ENCODE measurements at regions of chr17 and their contacts with region 1.

Region 1: GRCh38 chr17:29219378-29220047 is 27.1 kb upstream of the CRYBA1 start:
- DNase-seq: peak; percentile 81
- ATAC-seq: peak; percentile 95
- H3K4me3 Mint-ChIP-seq: no peak overlapping the region
- H3K27ac Mint-ChIP-seq: no peak overlapping the region
- H3K4me1 Mint-ChIP-seq: peaks cover 9% of the 10 kb centered on the region
- H3K27me3 Mint-ChIP-seq: peaks cover 2% of the 10 kb centered on the region

Region 2: DNA sequence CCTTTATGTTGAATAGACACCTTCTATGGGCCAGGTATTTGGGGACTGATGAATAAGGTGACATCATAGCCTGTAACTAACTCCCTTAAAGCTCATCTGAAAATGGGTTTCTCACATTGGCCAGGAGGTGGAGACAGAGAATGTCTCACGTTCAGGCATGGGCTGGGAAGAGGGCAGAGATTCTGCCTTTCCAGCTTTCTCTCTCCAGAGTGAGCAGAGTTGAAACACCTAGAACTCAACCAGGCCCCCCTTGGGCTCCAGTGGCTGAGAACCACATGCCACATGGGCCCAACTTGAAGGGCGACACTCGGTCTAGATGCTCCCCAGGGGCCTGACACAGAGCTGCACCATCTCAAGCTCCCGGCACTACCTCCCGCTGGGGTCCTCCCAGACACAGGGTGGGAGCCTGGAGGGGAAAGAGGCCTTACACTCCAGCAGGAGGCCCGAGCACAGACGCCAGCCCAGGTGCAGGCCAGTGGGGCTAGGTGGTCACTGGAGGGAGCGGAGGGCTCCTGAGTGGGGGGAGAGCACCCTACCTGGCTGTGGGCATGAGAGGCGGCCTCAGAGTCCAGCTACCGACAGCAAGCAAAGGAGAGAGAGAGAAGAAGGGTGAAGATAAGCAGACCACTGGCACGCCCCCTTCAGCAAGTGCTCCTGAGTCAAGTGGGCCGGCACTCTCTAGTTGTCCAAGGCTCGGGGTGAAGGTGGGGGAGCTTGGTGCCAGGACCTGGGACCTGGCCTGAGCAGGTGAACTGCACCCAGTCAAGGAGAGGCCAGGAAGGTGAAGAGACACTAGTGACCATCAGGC is 95.2 kb before region 1 on chr17:
- CTCF ChIA-PET with region 1: interaction called, 57 read pairs
- POLR2A ChIA-PET with region 1: no interaction called
- DNase-seq: peak; percentile 69
- ATAC-seq: peak; percentile 88
- H3K4me3 Mint-ChIP-seq: no peak overlapping the region
- H3K27ac Mint-ChIP-seq: peak overlapping the region; percentile 30
- H3K4me1 Mint-ChIP-seq: peaks cover 4% of the 10 kb centered on the region
- H3K27me3 Mint-ChIP-seq: no peaks in the 10 kb centered on the region

Region 3: GRCh38 chr17:29140051-29140621 is 79.4 kb before region 1 on chr17:
- CTCF ChIA-PET with region 1: interaction called, 266 read pairs
- POLR2A ChIA-PET with region 1: interaction called, 4 read pairs
- DNase-seq: peak; percentile 95
- ATAC-seq: peak; percentile 76
- H3K4me3 Mint-ChIP-seq: peak overlapping the region; percentile 92
- H3K27ac Mint-ChIP-seq: peak overlapping the region; percentile 98
- H3K4me1 Mint-ChIP-seq: peaks cover 70% of the 10 kb centered on the region
- H3K27me3 Mint-ChIP-seq: no peaks in the 10 kb centered on the region

Region 4: DNA sequence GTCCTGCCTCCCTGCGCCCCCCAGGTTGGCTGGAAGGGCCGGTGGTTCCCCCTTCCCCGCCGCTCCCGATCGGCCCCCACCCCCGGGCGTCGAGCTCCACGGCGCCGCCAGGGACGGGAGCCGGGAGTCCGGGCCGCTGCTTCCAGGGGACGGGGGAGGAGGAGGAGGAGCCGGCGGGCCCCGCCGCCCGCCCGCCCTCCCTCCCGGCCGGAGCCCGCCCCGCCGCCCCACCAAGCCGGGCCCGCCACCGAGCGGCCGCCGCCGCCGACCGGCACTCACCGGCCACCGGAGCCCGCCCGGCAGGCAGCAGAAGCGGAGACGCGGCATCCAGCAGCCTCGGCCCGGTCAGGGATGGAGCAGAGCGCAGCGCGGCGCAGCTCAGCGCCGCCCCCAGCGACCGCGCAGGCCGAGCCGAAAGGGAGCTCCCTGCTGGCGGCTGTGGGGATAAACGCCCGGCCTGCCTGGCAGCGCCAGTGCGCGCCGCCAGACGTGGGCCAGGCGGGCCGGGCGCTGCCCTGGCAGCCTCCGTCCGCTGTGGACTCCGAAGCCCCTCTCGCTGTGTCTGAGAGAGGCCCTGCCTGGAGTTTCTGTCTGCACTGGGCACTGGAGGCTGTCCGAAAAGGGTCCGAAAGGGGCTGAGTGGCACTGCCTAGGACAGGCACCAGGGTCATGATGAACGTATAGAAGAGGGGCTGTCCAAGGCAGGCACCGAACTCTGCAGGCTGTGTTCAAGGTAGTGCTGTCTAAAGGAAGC is 39.3 kb before region 1 on chr17 and contains the start of gene MYO18A:
- CTCF ChIA-PET with region 1: interaction called, 23 read pairs
- POLR2A ChIA-PET with region 1: no interaction called
- DNase-seq: peak; percentile 83
- ATAC-seq: peak; percentile 94
- H3K4me3 Mint-ChIP-seq: peak within 1 kb of the TSS; percentile 51
- H3K27ac Mint-ChIP-seq: no peak within 1 kb of the TSS
- H3K4me1 Mint-ChIP-seq: peaks cover 38% of the 10 kb centered on the region
- H3K27me3 Mint-ChIP-seq: peaks cover 10% of the 10 kb centered on the region
- total RNA-seq, gene MYO18A: 53.4 to 53.8 TPM

Region 5: GRCh38 chr17:29241015-29241963 is 21.8 kb after region 1 on chr17:
- CTCF ChIA-PET with region 1: interaction called, 14 read pairs
- POLR2A ChIA-PET with region 1: no interaction called
- DNase-seq: no peak
- ATAC-seq: no peak
- H3K4me3 Mint-ChIP-seq: no peak overlapping the region
- H3K27ac Mint-ChIP-seq: no peak overlapping the region
- H3K4me1 Mint-ChIP-seq: peaks cover 11% of the 10 kb centered on the region
- H3K27me3 Mint-ChIP-seq: no peaks in the 10 kb centered on the region

Measured in activated CD8-positive, alpha-beta T cell treated with anti-CD3 and anti-CD28 coated beads, Interleukin-2, amount 10 ng/mL, durations not matched to agents 7 days and 5 days (primary cell).